ENCODE measurements at regions of chr18 and their contacts with region 1.

Region 1: DNA sequence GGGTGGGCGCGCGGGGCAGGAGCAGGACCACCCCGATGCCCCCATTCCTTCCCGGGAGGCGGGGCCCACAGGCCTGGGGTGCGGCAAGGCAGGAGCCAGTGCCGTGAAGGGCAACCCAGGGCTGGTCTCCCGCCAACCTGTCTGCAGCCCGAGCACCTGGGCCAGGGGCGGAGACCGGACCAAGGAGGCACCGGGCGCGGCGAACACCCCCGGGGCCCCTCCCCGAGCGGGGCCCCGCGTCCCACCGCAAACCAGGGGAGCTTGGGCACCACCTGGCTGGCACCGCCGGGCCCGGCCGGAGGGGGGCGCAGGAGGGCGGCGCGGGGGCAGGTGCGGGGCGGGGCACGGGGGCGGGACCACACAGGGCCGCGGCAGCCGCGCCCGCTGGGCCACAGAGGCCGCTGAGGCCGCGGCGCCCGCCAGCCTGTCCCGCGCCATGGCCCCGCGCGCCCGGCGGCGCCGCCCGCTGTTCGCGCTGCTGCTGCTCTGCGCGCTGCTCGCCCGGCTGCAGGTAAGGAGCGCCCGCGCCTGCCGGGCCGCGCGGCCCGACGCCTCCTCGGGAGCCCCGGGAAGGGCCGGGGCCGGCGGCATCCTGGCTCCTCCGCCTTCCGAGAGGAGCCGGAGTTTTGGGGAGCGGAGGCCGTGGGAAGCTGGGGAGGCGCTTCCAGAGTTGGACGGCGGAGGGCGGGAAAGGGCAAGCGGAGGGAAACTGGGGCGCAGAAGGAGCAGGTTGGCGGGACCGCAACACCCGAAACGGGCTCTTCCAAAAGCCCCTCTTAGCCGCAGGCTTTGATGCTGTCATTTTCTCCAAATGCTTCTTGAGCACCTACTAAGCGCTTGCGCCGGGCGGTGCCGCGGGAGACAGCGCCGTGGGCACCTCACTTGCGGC is at the start of gene TNFRSF11A:
- DNase-seq: peak; percentile 34 to 58
- ATAC-seq: peak; percentile 72 to 90 (median 77)
- H3K4me3 ChIP-seq: peak within 1 kb of the TSS; percentile 66
- H3K27ac ChIP-seq: no peak within 1 kb of the TSS
- H3K4me1 ChIP-seq: peaks cover 17% of the 10 kb centered on the region
- H3K27me3 ChIP-seq: peaks cover 4 to 85% (median 25%) of the 10 kb centered on the region in 3 donors
- CTCF ChIP-seq: peak; percentile 30
- total RNA-seq, gene TNFRSF11A: 0.60 to 1.3 (median 1.0) TPM

Region 2: GRCh38 chr18:62164855-62165487 is 160.2 kb before region 1 on chr18:
- intact Hi-C with region 1: no loop called
- DNase-seq: no peak
- ATAC-seq: no peak
- H3K4me3 ChIP-seq: no peak overlapping the region
- H3K27ac ChIP-seq: no peak overlapping the region
- H3K4me1 ChIP-seq: no peaks in the 10 kb centered on the region
- H3K27me3 ChIP-seq: no peaks in the 10 kb centered on the region
- CTCF ChIP-seq: no peak

Region 3: DNA sequence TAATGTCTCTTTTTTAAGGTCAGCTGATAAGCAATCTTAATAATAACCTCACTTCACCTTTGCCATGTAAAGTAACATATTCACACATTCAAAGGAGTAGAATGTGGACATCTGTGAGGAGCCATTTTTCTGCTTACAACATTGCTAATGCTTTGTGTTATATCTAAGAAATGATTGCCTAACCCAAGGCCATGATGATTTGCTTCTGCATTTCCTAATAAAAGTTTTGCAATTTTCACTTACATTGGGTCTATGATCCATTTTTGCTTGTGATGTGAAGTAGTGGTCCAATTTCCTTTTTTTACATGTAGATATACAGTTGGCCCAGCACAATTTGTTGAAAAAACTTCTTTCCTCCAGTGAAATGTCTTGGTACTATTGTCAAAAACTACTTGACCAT is 116.1 kb before region 1 on chr18:
- intact Hi-C with region 1: no loop called
- DNase-seq: no peak
- ATAC-seq: no peak
- H3K4me3 ChIP-seq: no peak overlapping the region
- H3K27ac ChIP-seq: no peak overlapping the region
- H3K4me1 ChIP-seq: no peaks in the 10 kb centered on the region
- H3K27me3 ChIP-seq: no peaks in the 10 kb centered on the region
- CTCF ChIP-seq: no peak

Region 4: DNA sequence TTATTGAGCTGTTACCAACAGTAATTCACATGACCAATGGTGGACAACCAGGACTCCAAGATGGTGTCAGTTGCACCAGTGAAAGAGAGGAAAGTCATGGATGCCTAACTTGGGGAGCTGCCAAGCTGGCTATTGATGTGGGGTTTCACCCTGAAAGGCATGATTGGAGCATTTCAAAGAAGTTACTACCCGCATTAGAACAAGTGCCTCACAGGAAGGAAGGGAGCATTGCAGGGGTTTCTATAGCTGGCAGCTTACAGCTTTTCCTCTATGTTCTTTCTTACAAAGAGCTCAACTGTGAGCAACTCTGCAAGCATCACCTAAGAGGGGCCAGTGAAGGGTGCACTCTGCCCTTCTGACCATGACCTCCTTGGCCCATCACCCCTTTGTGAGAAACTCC is 93.1 kb after region 1 on chr18:
- intact Hi-C with region 1: loop called in 1 of 2 experiments (anchors 5 kb)
- DNase-seq: no peak
- ATAC-seq: no peak
- H3K4me3 ChIP-seq: no peak overlapping the region
- H3K27ac ChIP-seq: no peak overlapping the region
- H3K4me1 ChIP-seq: no peaks in the 10 kb centered on the region
- H3K27me3 ChIP-seq: no peaks in the 10 kb centered on the region
- CTCF ChIP-seq: no peak

Region 5: DNA sequence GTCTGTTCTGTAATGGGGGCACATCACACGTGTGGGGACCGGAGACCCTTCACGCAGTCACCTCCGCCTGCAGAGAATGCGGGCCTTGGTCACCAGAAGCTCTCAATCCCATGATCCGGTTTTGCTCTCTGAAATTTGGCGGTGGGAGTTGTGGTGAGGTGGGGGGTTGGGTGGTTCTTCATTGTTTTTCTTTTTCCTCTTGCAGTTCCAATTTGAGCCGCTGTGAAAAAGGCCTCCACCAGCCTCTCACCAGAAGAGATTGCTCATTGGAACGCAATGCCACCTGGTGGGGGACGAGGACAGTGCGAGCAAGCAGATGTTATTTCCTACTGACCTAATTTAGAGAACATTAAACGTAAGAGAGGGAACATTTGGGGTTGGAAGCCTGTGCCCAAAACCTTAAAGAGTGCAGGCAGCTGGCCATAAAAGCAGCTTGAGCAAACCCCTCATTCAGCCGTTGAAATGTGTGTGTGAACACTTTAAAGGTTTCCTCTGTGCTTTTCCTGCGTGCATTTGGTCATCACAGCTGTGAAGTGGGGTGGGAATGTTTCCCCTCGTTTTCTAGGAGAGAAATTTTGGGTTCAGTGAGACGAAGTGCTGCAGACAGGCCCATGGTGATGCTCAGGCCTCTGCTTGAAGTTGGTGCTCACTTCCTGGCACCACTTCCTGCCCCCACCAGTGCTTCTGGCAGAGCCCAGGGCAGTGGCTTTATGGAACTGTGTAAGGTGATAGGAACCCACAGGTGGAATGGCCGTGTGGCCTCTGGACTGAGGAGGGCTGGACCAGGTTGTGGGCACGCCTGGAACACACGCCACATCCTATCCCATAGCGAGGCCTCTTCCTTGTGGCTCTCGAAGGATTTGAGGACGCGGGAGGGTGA is 259.3 kb after region 1 on chr18:
- intact Hi-C with region 1: loop called in 1 of 2 experiments (anchors 10 kb)
- DNase-seq: peak; percentile 84 to 91
- ATAC-seq: peak; percentile 90 to 93 (median 90)
- H3K4me3 ChIP-seq: peak overlapping the region; percentile 28
- H3K27ac ChIP-seq: peak overlapping the region; percentile 13
- H3K4me1 ChIP-seq: peaks cover 16% of the 10 kb centered on the region
- H3K27me3 ChIP-seq: no peaks in the 10 kb centered on the region
- CTCF ChIP-seq: peak; percentile 91